ENCODE measurements at regions of chr7 and their contacts with region 1.

Region 1: DNA sequence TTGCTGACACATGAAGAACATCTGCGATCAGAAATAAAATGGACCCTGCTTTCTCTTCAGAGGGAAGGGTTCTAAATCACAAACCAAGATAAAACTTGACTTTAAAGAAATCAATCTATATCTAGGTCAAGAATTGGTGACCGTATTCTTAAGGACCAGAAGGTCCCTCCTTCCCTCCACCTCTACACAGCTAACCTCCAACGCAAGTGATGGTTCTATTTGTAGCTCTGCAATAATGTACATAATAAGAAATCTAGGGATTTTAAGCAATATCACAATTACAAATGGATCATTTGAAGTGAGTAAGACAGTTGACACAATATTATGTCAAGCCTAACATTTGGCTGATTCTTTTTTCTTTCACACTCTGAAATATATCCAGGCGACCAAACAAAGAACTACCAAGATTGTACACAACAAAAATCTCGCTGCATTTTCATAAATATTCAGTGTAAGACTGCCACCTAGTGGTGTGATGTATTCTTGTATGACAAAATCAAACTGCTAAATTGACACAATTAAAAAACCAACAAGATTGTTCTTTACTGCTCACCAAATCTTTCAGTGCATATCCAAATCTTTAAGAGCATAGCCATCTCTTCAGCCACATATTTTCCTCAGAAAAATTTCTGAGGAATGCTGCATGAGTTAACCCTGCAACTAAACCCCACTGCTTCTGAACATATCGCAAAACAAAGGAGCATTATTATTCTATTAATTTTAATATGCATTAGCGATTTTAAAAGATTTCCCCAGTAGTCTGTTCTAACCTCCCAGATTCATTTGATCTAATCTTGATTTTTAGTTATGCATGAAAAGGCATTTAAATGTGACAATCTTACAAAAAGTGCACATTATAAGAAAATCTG is 44.5 kb downstream of the ICA1 start:
- DNase-seq: no peak
- ATAC-seq: no peak

Region 2: DNA sequence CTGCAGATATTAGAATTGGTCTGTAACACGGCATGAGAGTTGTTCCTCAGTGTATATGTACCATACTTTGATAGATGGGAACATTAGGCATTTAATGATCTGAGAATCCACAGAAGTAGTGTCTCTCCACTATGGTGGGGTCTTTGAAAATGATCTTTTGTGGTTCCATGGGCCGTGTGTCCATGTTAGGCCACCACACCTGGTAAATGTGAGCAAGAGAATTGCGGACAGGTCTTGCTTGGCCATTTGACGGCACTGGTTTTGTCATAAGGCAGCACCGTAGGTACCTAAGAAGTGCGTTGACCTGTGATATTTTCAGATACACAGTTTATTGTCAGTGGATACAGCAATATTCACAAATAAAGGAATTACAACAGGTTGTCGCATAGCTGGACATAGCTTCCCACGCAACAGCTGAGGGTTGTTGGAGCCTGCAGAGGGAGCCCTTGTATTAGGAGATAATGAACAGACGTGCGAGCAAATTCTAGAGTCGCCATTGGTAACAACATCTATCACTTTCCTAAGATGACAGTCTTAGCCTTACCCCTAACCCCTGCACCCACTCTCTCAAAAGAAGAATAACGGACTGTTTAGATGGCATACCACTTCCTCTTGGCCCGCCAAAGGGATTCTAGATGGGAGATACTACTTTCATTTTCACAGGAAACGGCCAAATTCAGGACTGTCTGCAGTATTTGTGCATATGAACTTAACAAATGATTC is 793.1 kb before region 1 on chr7:
- intact Hi-C with region 1: loop called (anchors 10 kb)
- DNase-seq: no peak
- ATAC-seq: peak; percentile 74

Region 3: GRCh38 chr7:7595451-7595850 is 622.0 kb before region 1 on chr7:
- intact Hi-C with region 1: loop called (anchors 10 kb)
- DNase-seq: no peak
- ATAC-seq: no peak

Region 4: GRCh38 chr7:7640221-7641128 is 577.0 kb before region 1 on chr7 and contains the start of gene UMAD1:
- intact Hi-C with region 1: loop called (anchors 5 kb)
- DNase-seq: peak; percentile 99
- ATAC-seq: peak; percentile 100
- total RNA-seq, gene UMAD1: 13.3 TPM

Region 5: DNA sequence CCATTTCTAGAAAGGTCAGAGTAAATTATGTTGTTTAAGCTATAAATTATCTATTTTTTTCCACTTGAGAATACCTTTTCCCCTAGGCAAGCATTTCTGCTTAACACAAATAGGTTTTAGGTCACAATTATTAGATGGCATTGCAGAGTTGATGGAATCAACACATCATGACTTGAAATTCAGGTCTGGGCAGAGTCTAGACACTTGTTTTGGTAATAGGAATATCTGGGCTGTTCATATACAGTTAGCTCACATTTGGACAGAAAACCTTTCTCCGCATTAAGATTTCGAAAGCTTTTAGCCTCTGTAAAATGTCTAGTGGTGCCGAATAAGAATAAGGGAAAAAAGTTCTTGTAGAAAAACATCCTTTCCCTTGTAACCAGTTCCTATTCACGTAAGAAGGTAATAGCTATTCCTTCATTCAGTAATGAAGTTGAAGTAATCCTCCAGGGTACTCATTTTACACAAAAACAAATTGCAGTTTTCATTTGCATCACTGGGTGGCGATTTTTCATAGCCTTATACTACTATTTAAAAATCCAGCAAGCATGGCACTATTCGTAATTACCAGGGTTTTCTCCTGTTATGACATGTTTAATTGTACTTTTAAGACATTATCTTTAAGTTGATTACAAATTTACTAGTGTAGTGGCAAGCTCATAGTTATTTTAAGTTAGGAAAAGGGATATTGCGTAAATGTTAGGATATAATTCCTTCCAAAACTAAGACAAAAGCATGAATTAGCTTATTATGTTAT is 536.1 kb before region 1 on chr7:
- intact Hi-C with region 1: loop called (anchors 10 kb)
- DNase-seq: no peak
- ATAC-seq: peak; percentile 86

Region 6: DNA sequence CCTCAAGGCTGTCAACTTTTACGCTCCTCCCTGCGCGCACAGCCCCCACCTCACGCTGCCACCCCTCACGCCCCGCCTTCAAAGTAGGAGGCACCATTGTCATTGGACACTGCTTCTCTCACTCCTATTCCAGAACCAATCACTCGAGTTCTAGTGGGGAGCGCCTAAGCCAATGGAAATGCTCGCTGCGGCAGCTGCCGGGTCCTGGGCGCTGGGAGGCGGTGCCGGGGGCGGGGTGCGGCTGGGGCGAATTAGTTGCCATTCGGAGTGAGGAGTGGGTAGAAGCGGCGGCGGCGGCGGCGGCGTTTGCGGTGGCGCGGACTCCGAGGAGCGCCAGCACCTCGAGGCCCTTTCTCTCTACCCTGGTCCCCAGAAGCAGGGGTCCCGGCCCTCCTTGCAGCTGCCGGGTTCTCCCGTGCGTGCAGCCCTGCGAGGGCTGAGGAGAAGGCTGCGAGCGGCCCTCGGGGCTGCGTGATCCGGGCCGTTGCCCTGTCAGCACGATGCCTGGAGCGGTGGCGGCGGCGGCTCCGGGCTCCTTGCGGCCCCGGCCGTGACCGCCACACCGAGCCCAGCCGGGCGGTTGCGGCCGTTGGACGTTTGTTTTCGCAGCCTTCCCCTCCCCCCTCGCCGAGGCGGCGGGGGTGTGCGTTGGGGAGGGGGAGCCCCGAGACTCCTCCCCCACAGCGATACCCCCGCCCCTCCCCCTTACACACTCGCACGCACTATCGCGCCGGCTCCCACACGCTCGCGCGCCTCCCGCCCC is 248.7 kb before region 1 on chr7 and contains the start of gene GLCCI1:
- intact Hi-C with region 1: loop called (anchors 5 kb)
- DNase-seq: peak; percentile 97
- ATAC-seq: peak; percentile 99
- total RNA-seq, gene GLCCI1: 5.7 TPM

Measured in Right ventricle myocardium inferior (tissue), 1 donor.